ENCODE measurements at regions of chr12 and their contacts with region 1.

Region 1: GRCh38 chr12:19186722-19187661 is 57.5 kb downstream of the PLEKHA5 start:
- DNase-seq: no peak
- H3K4me3 Mint-ChIP-seq: no peak overlapping the region
- H3K27ac Mint-ChIP-seq: no peak overlapping the region
- H3K4me1 Mint-ChIP-seq: peaks cover 2% of the 10 kb centered on the region
- H3K27me3 Mint-ChIP-seq: peaks cover 6% of the 10 kb centered on the region

Region 2: GRCh38 chr12:18139989-18140596 is 1046.9 kb before region 1 on chr12:
- intact Hi-C with region 1: loop called (anchors 2 kb)
- DNase-seq: no peak
- H3K4me3 Mint-ChIP-seq: no peak overlapping the region
- H3K27ac Mint-ChIP-seq: no peak overlapping the region
- H3K4me1 Mint-ChIP-seq: no peaks in the 10 kb centered on the region
- H3K27me3 Mint-ChIP-seq: no peaks in the 10 kb centered on the region

Region 3: DNA sequence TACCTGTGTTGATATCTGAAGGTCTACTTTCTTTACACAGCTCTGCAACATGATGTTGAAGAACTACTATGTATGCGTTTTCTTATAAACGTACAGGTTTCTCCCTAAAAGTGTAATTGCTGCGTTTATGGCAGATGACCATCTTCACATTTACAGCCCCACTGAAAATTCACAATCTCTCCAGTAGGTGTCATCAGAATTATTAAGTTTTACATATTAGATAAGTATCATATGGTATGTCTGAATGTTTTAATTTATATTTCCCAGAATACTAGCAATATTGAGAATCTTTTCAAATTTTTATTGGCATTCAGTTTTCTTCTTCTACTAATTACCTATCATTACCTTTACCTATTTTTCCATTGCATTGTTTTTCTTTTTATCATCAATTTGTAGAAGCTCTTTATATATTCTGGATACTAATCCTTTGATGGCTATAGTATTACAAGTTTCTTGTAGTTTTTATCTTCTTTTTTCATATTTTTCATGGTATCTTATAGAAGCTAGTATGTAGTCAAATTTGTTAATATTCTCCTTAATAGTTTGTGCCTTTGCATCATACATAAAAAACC is 325.6 kb before region 1 on chr12:
- intact Hi-C with region 1: loop called (anchors 5 kb)
- DNase-seq: no peak
- H3K4me3 Mint-ChIP-seq: no peak overlapping the region
- H3K27ac Mint-ChIP-seq: no peak overlapping the region
- H3K4me1 Mint-ChIP-seq: no peaks in the 10 kb centered on the region
- H3K27me3 Mint-ChIP-seq: no peaks in the 10 kb centered on the region

Region 4: GRCh38 chr12:19223018-19223417 is 36.0 kb after region 1 on chr12:
- intact Hi-C with region 1: no loop called
- DNase-seq: no peak
- H3K4me3 Mint-ChIP-seq: no peak overlapping the region
- H3K27ac Mint-ChIP-seq: no peak overlapping the region
- H3K4me1 Mint-ChIP-seq: peaks cover 1% of the 10 kb centered on the region
- H3K27me3 Mint-ChIP-seq: peaks cover 3% of the 10 kb centered on the region